ENCODE measurements at regions of chr1 and their contacts with region 1.

Region 1: DNA sequence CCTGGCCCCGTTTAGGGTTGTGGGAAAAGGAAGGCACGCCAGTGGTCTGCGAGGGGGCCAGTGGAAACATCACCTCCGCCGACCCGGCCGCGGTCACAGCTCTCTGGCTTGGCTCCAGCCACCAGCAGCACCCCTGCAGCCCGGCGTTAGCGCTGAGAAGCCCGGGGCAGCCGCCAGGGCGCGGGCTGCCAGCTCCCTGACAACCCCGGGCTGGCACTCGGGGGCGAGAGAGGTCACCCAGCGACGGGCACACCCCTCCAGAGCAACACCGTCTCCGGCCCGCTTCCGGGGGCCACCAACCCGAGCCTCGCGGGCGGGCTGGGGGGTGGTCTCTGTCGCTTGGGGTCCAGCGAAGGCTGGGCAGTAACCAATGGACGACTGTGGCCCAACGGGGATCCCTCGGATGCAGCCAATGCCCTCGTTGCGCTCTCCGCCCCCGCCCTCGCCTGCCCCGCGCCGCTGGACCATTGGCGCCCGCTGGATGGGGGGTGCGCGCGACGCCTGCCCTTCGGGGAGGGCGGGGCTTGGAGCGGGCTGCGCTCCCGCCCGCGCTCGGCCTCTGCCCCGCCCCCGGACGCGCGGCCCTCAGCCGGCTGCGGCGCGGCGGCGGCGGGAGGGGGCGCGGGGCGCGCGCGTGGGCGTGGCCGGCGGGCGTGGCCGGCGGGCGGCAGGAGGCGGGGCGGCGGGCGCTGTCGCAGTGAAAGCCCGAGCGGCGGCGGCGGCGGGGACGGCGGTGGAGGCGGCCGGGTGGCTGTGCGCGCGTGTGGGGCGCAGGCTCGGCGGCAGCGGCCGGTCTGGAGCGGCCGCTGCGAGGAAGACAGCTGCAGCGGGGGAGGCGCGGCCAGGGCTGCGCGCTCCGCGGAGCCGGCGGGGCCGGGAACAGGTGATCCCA is at the start of gene MAN1C1:
- DNase-seq: peak; percentile 84 to 98 (median 88)

Region 2: GRCh38 chr1:25430666-25431505 is 185.5 kb before region 1 on chr1 and contains the start of gene MACO1:
- intact Hi-C with region 1: loop called (anchors 2 kb)
- DNase-seq: peak; percentile 98 to 100 (median 99)

Region 3: DNA sequence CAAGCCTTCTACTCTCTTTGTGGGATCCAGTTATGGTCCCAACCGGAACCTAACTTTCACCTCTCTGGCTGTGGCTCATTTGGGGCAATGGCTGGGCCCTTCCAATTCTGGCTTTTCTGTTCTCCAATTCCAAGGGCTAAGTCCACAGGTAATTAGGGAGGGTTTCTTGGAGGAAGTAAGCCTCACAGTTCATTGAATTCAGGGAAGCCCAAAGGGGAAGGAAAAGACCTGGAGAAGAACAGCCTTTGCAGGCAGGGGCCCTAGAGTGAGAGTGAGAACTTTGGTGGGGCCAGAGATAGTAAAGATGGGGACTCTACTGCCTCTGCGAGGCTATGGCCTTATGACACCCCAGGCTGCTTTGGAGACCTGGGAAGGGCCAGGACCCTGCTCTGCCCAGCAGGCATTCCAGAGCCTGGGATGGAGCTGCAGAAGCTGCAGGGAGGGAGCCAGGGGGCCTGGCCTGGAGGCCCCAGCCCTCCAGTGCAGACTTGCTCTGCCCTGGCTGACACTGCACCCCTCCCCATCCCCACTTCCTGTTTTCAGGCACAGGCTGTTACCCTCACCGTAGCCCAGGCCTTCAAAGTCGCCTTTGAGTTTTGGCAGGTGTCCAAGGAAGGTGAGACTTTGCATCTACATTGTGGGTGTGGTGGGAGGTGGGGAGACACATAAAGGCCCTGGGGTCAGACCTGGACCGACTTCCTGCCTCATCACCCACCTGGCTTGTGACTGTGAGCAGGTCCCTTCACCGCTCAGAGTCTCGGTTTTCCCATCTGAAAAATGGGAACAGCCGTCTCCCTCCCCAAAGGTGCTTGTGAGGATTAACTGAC is 54.0 kb before region 1 on chr1:
- intact Hi-C with region 1: loop called (anchors 5 kb)
- DNase-seq: no peak

Region 4: DNA sequence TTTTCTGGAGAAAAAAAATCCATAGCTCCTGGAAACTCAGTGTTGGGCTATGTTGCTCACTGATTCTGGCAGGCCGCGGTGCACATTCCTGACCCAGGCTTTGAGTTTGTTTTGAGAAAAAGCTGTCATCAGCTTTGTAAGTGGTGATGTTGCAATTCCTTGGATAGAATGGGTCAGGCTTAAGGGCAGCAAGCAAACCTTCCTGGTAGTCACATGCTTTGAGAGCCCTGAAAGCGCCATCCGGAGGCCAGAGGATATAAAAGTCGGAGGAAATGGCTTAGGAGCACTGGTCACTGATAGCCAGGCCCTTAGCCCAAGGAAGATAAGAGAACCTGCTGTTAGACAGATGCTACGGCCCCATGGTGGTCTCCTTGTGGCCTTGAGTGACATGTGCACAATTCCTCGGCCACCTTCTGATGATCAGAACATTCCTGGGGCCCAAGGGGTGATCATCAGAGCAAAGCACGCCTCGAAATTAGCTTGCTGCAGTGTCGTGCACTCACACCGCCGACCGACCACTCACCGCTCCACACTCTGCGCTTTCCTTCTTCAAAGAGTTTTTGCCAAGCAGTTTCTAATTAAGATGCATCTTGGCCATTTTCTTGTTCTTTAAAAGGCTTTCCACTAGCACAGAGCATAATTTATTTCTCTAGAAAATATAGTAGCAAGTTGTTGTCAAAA is 78.9 kb after region 1 on chr1:
- intact Hi-C with region 1: loop called (anchors 5 kb)
- DNase-seq: peak in 2 of 10 donors; percentile 67 to 87

Region 5: DNA sequence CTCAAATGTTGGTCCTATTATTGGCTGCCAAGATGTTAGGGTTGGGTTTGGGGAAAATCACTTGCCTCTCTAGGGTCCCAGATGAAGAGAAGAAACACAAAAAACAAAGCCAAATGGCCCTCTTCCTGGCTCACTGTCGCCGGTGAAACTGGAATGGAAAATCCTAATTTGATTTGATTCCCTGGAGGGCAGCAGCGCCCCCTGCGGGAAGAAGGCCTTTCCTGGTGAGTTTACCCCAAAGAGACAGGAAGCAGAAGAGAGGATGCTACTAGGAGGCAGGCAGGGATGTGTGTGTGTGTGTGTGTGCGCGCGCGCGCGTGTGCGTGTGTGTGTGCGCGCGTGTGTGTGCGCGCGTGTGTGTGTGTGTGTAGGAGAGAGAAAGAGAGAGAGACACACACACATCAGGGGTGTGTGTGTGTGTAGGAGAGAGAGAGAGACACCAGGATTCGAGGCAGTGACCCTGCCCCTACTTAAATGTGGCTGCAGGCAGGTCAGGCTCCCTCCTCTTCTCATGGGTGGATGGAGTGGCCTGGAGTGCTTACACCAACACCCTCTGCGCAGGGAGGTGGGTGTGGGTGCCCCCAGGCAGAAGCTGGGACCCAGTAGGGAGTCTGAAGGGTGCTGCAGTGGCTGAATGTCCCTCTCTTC is 180.6 kb after region 1 on chr1:
- intact Hi-C with region 1: loop called (anchors 5 kb)
- DNase-seq: peak; percentile 66 to 96 (median 88)

Region 6: GRCh38 chr1:25895365-25895993 is 279.1 kb after region 1 on chr1:
- intact Hi-C with region 1: no loop called
- DNase-seq: peak; percentile 86 to 99 (median 93)

Measured in posterior cingulate gyrus (tissue), 11 donors.